ENCODE measurements at regions of chr7 and their contacts with region 1.

Region 1: DNA sequence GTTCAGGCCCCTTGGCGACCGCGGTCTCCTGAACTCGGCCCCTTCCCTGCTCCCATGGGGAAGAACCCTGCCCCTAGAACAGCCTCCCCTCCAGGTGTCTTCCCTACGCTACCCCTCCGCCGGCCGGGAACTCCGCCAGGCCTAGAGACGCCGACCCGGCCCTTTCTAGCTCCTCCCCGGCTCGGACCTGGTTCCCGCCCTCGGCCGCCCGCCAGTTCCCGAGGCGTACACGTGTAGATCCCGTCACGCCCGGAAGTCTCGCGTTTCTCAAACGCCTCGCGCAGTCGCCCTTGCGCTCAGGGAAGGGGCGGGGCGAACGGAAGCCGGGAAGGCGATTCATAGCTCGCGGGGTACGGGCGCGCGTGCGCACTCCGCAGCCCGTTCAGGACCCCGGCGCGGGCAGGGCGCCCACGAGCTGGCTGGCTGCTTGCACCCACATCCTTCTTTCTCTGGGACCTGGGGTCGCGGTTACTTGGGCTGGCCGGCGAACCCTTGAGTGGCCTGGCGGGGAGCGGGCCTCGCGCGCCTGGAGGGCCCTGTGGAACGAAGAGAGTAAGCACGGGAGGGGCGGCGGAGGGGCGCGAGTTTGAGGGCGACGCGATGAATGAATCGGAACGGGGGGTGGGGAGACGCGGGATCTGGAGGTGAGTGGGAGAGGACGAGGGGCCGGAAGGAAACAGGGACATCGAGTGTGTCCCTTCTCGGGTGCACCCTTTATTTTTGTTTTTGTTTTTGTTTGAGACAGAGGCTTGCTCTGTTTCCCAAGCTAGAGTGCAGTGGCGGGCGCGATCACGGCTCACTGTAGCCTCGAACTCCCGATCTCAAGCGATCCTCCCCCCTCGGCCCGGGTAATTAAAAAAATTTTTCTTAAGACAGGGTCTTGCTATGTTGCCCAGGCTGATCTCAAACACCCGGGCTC is at the start of gene POP7:
- DNase-seq: peak; percentile 94 to 99
- H3K4me3 ChIP-seq: peak within 1 kb of the TSS; percentile 83 to 94 (median 90)
- H3K27ac ChIP-seq: peak within 1 kb of the TSS; percentile 86
- H3K4me1 ChIP-seq: peaks cover 0 to 11% (median 2%) of the 10 kb centered on the region in 4 experiments; a peak in 3 of 7 replicates
- H3K27me3 ChIP-seq: no peaks in the 10 kb centered on the region
- CTCF ChIP-seq: no peak
- EP300 ChIP-seq: peak in 1 of 2 experiments; percentile 54; a peak in 1 of 3 replicates
- POLR2A ChIP-seq: peak; percentile 79 to 81
- RAD21 ChIP-seq: no peak
- total RNA-seq, gene POP7: 92.5 and 96.7 TPM in 2 replicates

Region 2: DNA sequence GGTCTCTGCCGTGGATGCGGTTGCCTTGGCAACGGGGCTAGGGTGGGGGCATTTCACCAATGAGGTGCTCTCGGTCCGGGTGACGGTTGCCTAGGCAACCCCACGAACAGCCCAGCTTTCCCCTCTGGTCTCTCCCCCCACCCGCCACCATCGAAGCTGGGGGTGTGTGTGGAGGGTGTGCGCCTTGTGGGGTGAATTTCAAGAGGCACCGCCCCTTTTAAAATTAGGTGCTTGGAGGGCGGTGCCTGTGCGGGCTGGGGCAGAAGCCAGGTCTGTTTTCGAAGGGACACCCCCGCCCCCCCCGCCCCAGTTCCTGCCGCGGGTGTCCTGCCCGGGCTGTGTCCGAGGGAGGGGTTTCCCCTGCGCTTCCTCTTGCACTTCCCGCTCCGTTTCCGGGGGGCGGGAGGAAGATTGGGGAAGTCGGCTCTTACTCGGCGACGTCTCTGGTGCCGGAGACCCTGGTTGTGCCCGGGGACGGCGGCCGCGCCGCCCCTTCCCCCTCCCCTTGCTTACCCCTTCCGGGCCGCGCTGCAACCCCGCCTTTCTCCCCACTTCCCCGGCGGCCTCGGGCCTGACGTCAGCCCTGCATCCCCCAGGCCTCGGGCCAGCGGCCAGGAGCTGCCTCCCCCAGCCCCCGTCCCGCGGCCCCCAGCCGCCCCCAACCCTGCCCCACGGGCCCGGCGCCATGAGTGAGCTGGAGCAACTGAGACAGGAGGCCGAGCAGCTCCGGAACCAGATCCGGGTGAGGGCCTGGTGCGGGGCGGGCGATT is 30.2 kb before region 1 on chr7:
- CTCF ChIA-PET with region 1: interaction called, 254 read pairs
- POLR2A ChIA-PET with region 1: interaction called, 12 read pairs
- DNase-seq: peak in 1 of 2 experiments; percentile 80
- H3K4me3 ChIP-seq: peak overlapping the region; percentile 43 to 99 (median 62)
- H3K27ac ChIP-seq: no peak overlapping the region
- H3K4me1 ChIP-seq: peaks cover 0 to 7% (median 2%) of the 10 kb centered on the region in 4 experiments; a peak in 6 of 7 replicates
- H3K27me3 ChIP-seq: peaks cover 0 to 8% (median 6%) of the 10 kb centered on the region in 4 experiments; a peak in 4 of 7 replicates
- CTCF ChIP-seq: no peak
- EP300 ChIP-seq: no peak
- POLR2A ChIP-seq: no peak
- RAD21 ChIP-seq: no peak

Region 3: GRCh38 chr7:100719523-100720319 is 13.7 kb after region 1 on chr7:
- CTCF ChIA-PET with region 1: interaction called, 197 read pairs
- POLR2A ChIA-PET with region 1: interaction called, 12 read pairs
- DNase-seq: no peak
- H3K4me3 ChIP-seq: peak overlapping the region; percentile 32 to 71 (median 50)
- H3K27ac ChIP-seq: no peak overlapping the region
- H3K4me1 ChIP-seq: peaks cover 0 to 5% (median 2%) of the 10 kb centered on the region in 4 experiments; a peak in 5 of 7 replicates
- H3K27me3 ChIP-seq: peaks cover 7 to 26% (median 26%) of the 10 kb centered on the region in 4 experiments
- CTCF ChIP-seq: peak; percentile 9 to 29 (median 22)
- EP300 ChIP-seq: no peak
- POLR2A ChIP-seq: no peak
- RAD21 ChIP-seq: peak; percentile 47 to 53

Region 4: GRCh38 chr7:100745184-100745583 is 39.2 kb after region 1 on chr7:
- CTCF ChIA-PET with region 1: interaction called, 11 read pairs
- POLR2A ChIA-PET with region 1: interaction called, 4 read pairs
- DNase-seq: no peak
- H3K4me3 ChIP-seq: peak overlapping the region; percentile 34 to 65 (median 50); a peak in 7 of 8 replicates
- H3K27ac ChIP-seq: no peak overlapping the region; the same call in 1 of the 2 replicates
- H3K4me1 ChIP-seq: no peaks in the 10 kb centered on the region
- H3K27me3 ChIP-seq: no peaks in the 10 kb centered on the region
- CTCF ChIP-seq: no peak
- EP300 ChIP-seq: no peak
- POLR2A ChIP-seq: no peak
- RAD21 ChIP-seq: no peak

Region 5: DNA sequence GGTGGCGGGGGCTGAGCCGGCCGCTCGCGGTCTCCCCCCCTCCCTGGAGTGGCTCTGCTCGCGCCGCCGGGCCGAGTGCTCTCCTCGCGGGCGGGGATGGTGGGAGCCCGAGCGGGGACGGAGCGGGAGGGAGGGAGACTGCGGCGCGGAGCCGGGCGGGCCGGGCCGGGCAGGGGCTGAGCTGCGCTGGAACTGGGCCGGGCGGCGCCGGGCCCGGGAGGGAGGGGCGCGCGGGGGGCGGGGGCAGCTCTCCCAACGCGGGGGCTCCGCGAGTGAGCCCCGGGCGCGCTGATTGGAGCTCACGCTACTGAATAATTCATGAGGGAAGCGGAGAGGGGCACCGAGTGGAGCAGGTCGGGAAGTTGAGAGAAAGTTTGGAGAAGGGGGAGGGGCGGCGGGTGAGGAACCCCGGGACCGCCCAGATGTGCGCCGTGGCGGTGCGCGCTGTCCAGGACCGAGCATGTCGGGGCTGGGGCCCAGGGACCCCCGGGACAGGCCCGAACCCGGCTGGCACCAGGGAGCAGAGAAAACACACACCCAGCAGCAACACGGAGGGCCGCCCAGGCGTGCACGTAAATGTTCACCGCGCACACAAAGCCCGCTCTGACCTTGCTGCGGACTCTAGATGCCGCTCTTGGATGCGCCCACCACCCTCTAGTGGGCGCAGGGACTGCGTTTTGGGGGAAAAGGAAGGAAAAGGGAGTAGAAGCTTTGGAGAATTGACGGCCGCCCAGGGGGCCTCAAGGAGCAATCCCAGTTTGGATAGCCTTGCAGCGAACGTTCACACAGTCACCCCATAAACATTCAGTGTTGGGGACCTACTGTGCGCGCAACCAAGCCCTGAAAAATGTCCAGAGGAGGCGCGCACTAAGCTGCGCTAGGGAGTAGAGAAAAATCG is 121.6 kb after region 1 on chr7 and contains the start of gene EPHB4:
- CTCF ChIA-PET with region 1: interaction called, 6 read pairs
- POLR2A ChIA-PET with region 1: interaction called, 10 read pairs
- DNase-seq: peak in 1 of 2 experiments; percentile 93
- H3K4me3 ChIP-seq: peak within 1 kb of the TSS; percentile 88 to 100 (median 92)
- H3K27ac ChIP-seq: peak within 1 kb of the TSS; percentile 81
- H3K4me1 ChIP-seq: peaks cover 0 to 13% (median 10%) of the 10 kb centered on the region in 4 experiments; a peak in 6 of 7 replicates
- H3K27me3 ChIP-seq: no peaks in the 10 kb centered on the region
- CTCF ChIP-seq: peak; percentile 55 to 63 (median 61)
- EP300 ChIP-seq: no peak
- POLR2A ChIP-seq: peak in 1 of 2 experiments; percentile 30; a peak in 1 of 3 replicates
- RAD21 ChIP-seq: peak; percentile 30 to 60; a peak in 3 of 4 replicates
- total RNA-seq, gene EPHB4: 113 and 122 TPM in 2 replicates

Region 6: DNA sequence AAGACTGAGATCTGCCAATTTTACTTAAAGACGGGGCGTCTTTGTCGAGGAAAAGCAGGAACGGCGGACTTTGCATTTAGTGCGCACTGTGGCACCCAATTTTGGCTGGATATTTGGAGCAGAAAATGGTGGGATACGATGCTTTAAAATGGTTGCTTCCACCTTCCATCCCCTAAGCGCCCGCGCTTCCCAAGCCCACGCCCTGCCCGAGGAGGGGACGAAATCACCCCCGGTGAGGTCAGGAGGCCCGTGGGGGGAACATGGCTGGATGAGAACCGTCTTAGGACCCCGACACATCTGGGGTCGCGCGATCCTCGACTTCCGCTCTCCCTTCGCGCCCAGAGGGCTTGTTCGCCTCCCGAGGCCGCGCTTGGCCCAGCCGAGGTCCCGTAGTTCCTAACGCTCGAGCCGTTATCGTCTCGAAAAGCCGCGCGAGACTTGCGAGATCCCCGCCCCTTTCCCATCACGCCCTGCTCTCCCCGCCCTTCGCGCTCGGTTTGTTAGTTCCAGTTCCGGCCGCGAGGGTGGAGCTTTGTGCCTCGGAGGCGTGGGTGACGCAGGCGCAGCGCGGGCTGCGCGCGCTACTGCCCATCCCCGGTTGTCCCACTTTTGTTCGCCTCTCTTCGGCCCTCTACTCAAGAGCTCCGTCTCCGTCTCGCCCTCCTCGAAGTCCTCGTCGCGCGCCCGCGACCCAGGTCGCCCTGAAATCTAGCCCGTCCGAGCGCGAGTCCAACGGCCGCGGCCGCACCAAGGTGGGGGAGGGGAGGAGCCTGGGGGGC is 168.8 kb after region 1 on chr7 and contains the start of gene SRRT:
- CTCF ChIA-PET with region 1: no interaction called
- POLR2A ChIA-PET with region 1: interaction called, 10 read pairs
- DNase-seq: peak; percentile 95 to 97
- H3K4me3 ChIP-seq: peak within 1 kb of the TSS; percentile 81 to 93 (median 91)
- H3K27ac ChIP-seq: peak within 1 kb of the TSS; percentile 93
- H3K4me1 ChIP-seq: peaks cover 0 to 9% (median 1%) of the 10 kb centered on the region in 4 experiments; a peak in 3 of 7 replicates
- H3K27me3 ChIP-seq: no peaks in the 10 kb centered on the region
- CTCF ChIP-seq: peak in 1 of 3 experiments; percentile 19; a peak in 1 of 4 replicates
- EP300 ChIP-seq: no peak; a peak in 1 of 3 replicates
- POLR2A ChIP-seq: peak in 1 of 2 experiments; percentile 98; a peak in 2 of 3 replicates
- RAD21 ChIP-seq: no peak
- total RNA-seq, gene SRRT: 237 and 239 TPM in 2 replicates

Measured in H1 (cell line).